Dorsolateral prefrontal cortex (tissue), 120 donors: ENCODE measurements at regions of chr9 and their contacts with region 1.

Region 1: GRCh38 chr9:105881654-105882349 is 187.5 kb downstream of the TMEM38B start:
- DNase-seq: peak; percentile 51 to 90 (median 72)
- H3K4me3 ChIP-seq: peak overlapping the region in 10 of 59 donors; percentile 9 to 42 (median 19)
- H3K27ac ChIP-seq: peak overlapping the region in 10 of 59 donors; percentile 21 to 73 (median 44)
- H3K27me3 ChIP-seq: peaks cover 0 to 4% (median 0%) of the 10 kb centered on the region in 45 donors
- CTCF ChIP-seq: peak; percentile 55 to 96 (median 88)

Region 2: DNA sequence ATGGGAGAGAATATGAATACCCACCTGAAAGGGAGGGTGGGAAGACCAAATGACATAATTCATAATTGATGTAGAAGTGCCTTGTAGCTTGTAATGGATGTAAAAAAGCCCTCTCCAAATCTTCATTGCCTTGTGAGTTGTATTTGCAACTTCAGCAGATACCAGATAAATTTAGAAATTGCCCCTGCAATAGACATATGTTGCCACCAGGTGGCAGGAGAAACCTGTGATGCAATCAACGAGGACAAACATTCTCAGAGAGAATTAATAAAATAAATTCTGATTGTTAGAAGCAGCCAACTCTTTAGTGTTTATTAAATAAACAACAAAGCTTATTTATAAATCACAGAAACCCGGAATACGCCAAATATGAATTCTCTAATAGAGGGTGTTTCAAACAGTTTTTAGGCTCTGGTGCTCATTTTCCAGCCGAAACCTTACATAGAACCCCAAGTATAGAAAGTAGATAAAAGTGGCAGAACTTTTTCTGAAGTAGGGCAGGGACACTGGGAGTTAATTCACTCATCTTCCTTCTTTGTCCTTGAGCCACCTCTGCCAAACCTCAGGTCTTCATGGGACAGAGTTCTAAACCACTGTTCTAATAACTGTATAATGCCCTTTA is 39.7 kb before region 1 on chr9:
- intact Hi-C with region 1: loop called (anchors 2 to 5 kb)
- DNase-seq: no peak
- H3K4me3 ChIP-seq: no peak overlapping the region
- H3K27ac ChIP-seq: no peak overlapping the region
- H3K27me3 ChIP-seq: no peaks in the 10 kb centered on the region
- CTCF ChIP-seq: peak; percentile 65 to 96 (median 84)

Region 3: GRCh38 chr9:105921057-105921735 is 39.4 kb after region 1 on chr9:
- intact Hi-C with region 1: no loop called
- DNase-seq: no peak
- H3K4me3 ChIP-seq: no peak overlapping the region
- H3K27ac ChIP-seq: no peak overlapping the region
- H3K27me3 ChIP-seq: no peaks in the 10 kb centered on the region
- CTCF ChIP-seq: peak in 3 of 56 donors; percentile 20 to 49 (median 30)

Region 4: GRCh38 chr9:106092083-106092482 is 210.3 kb after region 1 on chr9:
- intact Hi-C with region 1: no loop called
- DNase-seq: no peak
- H3K4me3 ChIP-seq: no peak overlapping the region
- H3K27ac ChIP-seq: no peak overlapping the region
- H3K27me3 ChIP-seq: no peaks in the 10 kb centered on the region
- CTCF ChIP-seq: no peak